ENCODE measurements at regions of chr16 and their contacts with region 1.

Region 1: DNA sequence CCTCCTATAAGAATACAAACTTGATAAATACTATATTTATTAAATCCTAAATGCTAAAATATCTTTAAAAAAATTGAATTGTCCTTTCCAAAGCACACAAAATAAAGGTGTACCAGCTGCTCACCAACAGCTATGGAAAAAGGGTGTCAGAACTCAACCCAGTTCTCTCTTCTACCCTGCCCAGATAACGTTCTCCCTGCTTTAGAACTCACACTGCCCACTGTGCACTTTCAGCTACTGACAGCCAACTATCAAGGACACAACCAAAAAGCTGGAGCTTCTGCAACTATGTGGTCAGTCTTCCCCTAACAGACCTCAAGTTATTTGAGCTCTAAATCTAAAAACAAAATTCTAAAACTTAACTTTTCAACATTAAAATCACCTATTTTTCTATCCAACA is 13.7 kb downstream of the AP1G1 start:
- DNase-seq: no peak
- H3K4me3 ChIP-seq: no peak overlapping the region
- H3K27ac ChIP-seq: no peak overlapping the region
- H3K4me1 ChIP-seq: peaks cover 12% of the 10 kb centered on the region
- H3K27me3 ChIP-seq: no peaks in the 10 kb centered on the region
- CTCF ChIP-seq: no peak

Region 2: GRCh38 chr16:71775949-71776348 is 19.0 kb before region 1 on chr16:
- CTCF ChIA-PET with region 1: no interaction called
- POLR2A ChIA-PET with region 1: interaction called, 11 read pairs
- intact Hi-C with region 1: no loop called
- DNase-seq: no peak
- H3K4me3 ChIP-seq: no peak overlapping the region
- H3K27ac ChIP-seq: no peak overlapping the region
- H3K4me1 ChIP-seq: no peaks in the 10 kb centered on the region
- H3K27me3 ChIP-seq: no peaks in the 10 kb centered on the region
- CTCF ChIP-seq: no peak

Region 3: DNA sequence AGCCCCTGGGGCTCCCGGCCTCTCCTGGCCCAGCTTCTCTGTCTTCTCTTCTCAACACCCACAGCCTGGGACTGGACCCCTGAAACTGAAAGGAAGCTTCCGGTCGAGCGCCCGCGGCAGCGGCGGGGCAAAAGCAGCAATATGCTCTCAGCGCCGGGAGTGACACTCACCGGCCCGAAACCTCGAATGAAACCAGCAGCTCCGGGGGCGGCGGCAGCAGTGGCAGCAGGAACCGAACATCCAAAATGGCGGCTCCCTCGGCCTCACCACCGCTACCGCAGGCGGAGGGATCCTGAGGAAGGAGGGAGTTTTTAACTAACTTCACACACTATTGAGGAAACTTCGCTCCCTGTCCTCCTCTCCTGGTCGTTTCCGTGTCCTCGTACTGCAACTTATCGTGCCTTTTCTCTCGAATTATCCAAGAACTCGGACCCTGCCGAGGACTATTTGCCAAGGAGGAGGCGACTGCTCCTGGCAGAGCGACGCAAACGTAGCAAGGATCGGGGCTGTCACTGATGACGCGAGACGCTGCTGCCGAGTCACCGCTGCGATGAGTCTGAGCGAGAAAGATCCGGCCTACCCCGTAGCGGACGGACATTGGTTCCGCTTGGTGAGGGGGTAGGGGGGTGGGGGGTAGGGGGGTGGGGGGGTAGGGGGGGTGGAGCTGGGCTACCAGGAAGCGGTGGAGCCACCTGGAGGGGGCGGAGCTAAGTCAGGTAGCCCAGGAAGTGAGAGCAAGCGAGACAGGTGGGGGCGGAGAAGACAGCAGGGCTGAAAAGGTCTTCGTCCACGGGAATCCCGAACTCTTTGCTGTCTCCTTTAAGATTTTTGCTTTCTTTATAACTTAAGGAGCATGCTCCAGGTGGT is 13.9 kb after region 1 on chr16 and contains the start of gene AP1G1:
- CTCF ChIA-PET with region 1: no interaction called
- POLR2A ChIA-PET with region 1: interaction called, 18 read pairs
- intact Hi-C with region 1: no loop called
- DNase-seq: peak; percentile 99
- H3K4me3 ChIP-seq: peak within 1 kb of the TSS; percentile 87
- H3K27ac ChIP-seq: peak within 1 kb of the TSS; percentile 99
- H3K4me1 ChIP-seq: peaks cover 14% of the 10 kb centered on the region
- H3K27me3 ChIP-seq: no peaks in the 10 kb centered on the region
- CTCF ChIP-seq: no peak
- total RNA-seq, gene AP1G1: 95.6 and 95.8 TPM in 2 replicates

Region 4: GRCh38 chr16:71853413-71853812 is 58.5 kb after region 1 on chr16:
- CTCF ChIA-PET with region 1: no interaction called
- POLR2A ChIA-PET with region 1: no interaction called
- intact Hi-C with region 1: no loop called
- DNase-seq: no peak
- H3K4me3 ChIP-seq: no peak overlapping the region
- H3K27ac ChIP-seq: no peak overlapping the region
- H3K4me1 ChIP-seq: no peaks in the 10 kb centered on the region
- H3K27me3 ChIP-seq: no peaks in the 10 kb centered on the region
- CTCF ChIP-seq: no peak

Measured in A673 (cell line).